Activated naive CD4-positive, alpha-beta T cell treated with anti-CD3 and anti-CD28 coated beads for 36 hours (primary cell): ENCODE measurements at regions of chr13 and their contacts with region 1.

Region 1: GRCh38 chr13:101127741-101128353 is 288.5 kb downstream of the NALCN start:
- DNase-seq: peak; percentile 34
- H3K4me3 Mint-ChIP-seq: no peak overlapping the region
- H3K27ac Mint-ChIP-seq: no peak overlapping the region
- H3K4me1 Mint-ChIP-seq: peaks cover 2% of the 10 kb centered on the region
- H3K27me3 Mint-ChIP-seq: peaks cover 3% of the 10 kb centered on the region

Region 2: GRCh38 chr13:99895223-99895994 is 1232.4 kb before region 1 on chr13:
- CTCF ChIA-PET with region 1: no interaction called
- intact Hi-C with region 1: loop called (anchors 5 kb)
- DNase-seq: no peak
- H3K4me3 Mint-ChIP-seq: peak overlapping the region; percentile 48
- H3K27ac Mint-ChIP-seq: no peak overlapping the region
- H3K4me1 Mint-ChIP-seq: peaks cover 3% of the 10 kb centered on the region
- H3K27me3 Mint-ChIP-seq: peaks cover 44% of the 10 kb centered on the region

Region 3: GRCh38 chr13:100721885-100722512 is 405.8 kb before region 1 on chr13:
- CTCF ChIA-PET with region 1: no interaction called
- intact Hi-C with region 1: loop called (anchors 1 kb)
- DNase-seq: peak; percentile 75
- H3K4me3 Mint-ChIP-seq: no peak overlapping the region
- H3K27ac Mint-ChIP-seq: no peak overlapping the region
- H3K4me1 Mint-ChIP-seq: no peaks in the 10 kb centered on the region
- H3K27me3 Mint-ChIP-seq: peaks cover 6% of the 10 kb centered on the region

Region 4: GRCh38 chr13:100875392-100876043 is 252.3 kb before region 1 on chr13:
- CTCF ChIA-PET with region 1: no interaction called
- intact Hi-C with region 1: loop called (anchors 5 kb)
- DNase-seq: peak; percentile 31
- H3K4me3 Mint-ChIP-seq: no peak overlapping the region
- H3K27ac Mint-ChIP-seq: peak overlapping the region; percentile 64
- H3K4me1 Mint-ChIP-seq: peaks cover 8% of the 10 kb centered on the region
- H3K27me3 Mint-ChIP-seq: peaks cover 57% of the 10 kb centered on the region

Region 5: GRCh38 chr13:101019126-101019525 is 108.7 kb before region 1 on chr13:
- CTCF ChIA-PET with region 1: no interaction called
- intact Hi-C with region 1: no loop called
- DNase-seq: no peak
- H3K4me3 Mint-ChIP-seq: no peak overlapping the region
- H3K27ac Mint-ChIP-seq: no peak overlapping the region
- H3K4me1 Mint-ChIP-seq: no peaks in the 10 kb centered on the region
- H3K27me3 Mint-ChIP-seq: peaks cover 21% of the 10 kb centered on the region

Region 6: DNA sequence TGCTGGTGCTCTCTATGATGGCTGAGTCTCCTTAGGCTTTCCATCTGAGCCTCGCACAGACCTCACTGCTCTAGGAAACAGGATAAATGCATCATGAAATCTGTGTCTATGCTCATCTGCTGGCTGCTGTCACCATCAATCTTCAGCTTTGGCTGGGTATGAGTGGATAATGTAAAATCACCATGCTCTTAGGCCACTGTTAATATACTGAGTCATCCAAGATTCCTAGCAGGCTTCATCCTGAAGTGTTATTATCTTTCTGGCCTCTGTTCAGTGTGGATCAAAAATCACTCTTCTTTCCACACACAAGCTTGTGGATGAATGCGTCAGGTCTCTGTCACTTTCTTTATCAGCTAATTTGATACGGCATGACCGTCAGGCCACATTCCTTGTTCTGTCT is 29.0 kb before region 1 on chr13:
- CTCF ChIA-PET with region 1: interaction called, 14 read pairs
- intact Hi-C with region 1: no loop called
- DNase-seq: no peak
- H3K4me3 Mint-ChIP-seq: no peak overlapping the region
- H3K27ac Mint-ChIP-seq: no peak overlapping the region
- H3K4me1 Mint-ChIP-seq: no peaks in the 10 kb centered on the region
- H3K27me3 Mint-ChIP-seq: peaks cover 2% of the 10 kb centered on the region

Region 7: GRCh38 chr13:101449971-101450748 is 322.3 kb after region 1 on chr13:
- CTCF ChIA-PET with region 1: no interaction called
- intact Hi-C with region 1: no loop called
- DNase-seq: no peak
- H3K4me3 Mint-ChIP-seq: no peak overlapping the region
- H3K27ac Mint-ChIP-seq: no peak overlapping the region
- H3K4me1 Mint-ChIP-seq: peaks cover 7% of the 10 kb centered on the region
- H3K27me3 Mint-ChIP-seq: peaks cover 25% of the 10 kb centered on the region